T-cell (primary cell): ENCODE measurements at regions of chr9 and their contacts with region 1.

Region 1: DNA sequence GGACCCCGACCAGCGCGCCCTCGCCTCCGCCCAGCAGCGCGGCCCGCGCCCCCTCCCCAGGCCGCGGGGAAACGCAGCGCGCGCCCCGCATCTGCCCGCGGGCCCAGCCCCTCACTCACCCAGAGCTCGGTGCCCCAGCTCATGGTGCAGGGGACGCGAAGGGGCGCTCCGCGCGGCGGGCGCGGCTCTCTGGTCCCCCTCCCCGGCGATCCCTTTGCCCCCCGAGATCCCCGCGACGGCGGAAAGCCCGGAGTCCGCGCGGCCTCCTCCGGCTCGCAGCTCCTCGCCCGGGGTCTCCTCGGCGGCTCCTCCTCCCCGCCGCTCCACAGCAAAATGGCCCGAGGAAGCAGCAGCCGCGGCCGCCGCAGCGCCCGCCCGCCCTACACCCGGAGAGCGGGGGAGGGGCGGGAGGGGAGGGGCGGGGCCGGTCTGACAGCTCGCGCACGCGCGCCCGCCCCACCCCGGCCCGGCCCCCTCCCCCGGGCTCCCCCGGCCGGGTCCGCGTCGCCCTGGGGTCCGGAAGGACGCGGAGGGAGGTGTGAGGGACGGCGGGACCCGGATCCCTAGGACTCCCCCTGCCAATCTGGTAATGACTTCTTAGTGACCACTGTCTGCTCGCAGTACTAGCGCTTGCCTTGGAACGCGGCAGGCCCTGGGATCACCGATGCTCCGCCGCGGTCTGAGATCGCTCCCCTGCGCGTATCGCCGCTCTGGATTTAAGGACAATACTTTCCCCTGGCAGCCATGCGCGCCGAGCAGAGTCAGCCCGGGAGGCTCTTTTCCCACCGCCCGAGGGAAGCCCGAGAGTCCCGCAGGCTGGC is at the start of gene FNBP1:
- DNase-seq: peak; percentile 58 to 88 (median 77)
- ATAC-seq: peak; percentile 75 to 84 (median 78)
- H3K4me3 ChIP-seq: peak within 1 kb of the TSS; percentile 92 to 98
- H3K4me3 Mint-ChIP-seq: peak within 1 kb of the TSS; percentile 98 to 100 (median 99)
- H3K27ac ChIP-seq: peak within 1 kb of the TSS; percentile 82
- H3K27ac Mint-ChIP-seq: peak within 1 kb of the TSS; percentile 97 to 99
- H3K4me1 ChIP-seq: peaks cover 32 to 33% of the 10 kb centered on the region in 2 experiments
- H3K4me1 Mint-ChIP-seq: peaks cover 51 to 66% (median 57%) of the 10 kb centered on the region in 3 donors
- H3K27me3 ChIP-seq: no peaks in the 10 kb centered on the region
- H3K27me3 Mint-ChIP-seq: no peaks in the 10 kb centered on the region
- total RNA-seq, gene FNBP1: 166 to 211 (median 182) TPM

Region 2: GRCh38 chr9:129885670-129886163 is 157.3 kb before region 1 on chr9:
- CTCF ChIA-PET with region 1: interaction called in 1 of 2 experiments, 7 read pairs
- POLR2A ChIA-PET with region 1: interaction called, 7 to 14 read pairs
- DNase-seq: peak; percentile 67 to 92 (median 81)
- ATAC-seq: peak; percentile 14 to 41 (median 38)
- H3K4me3 ChIP-seq: peak overlapping the region; percentile 62 to 90
- H3K4me3 Mint-ChIP-seq: peak overlapping the region; percentile 83 to 95 (median 85)
- H3K27ac ChIP-seq: peak overlapping the region; percentile 99
- H3K27ac Mint-ChIP-seq: peak overlapping the region; percentile 98 to 99
- H3K4me1 ChIP-seq: peaks cover 42 to 75% of the 10 kb centered on the region in 2 experiments
- H3K4me1 Mint-ChIP-seq: peaks cover 64 to 73% (median 68%) of the 10 kb centered on the region in 3 donors
- H3K27me3 ChIP-seq: no peaks in the 10 kb centered on the region
- H3K27me3 Mint-ChIP-seq: no peaks in the 10 kb centered on the region

Region 3: DNA sequence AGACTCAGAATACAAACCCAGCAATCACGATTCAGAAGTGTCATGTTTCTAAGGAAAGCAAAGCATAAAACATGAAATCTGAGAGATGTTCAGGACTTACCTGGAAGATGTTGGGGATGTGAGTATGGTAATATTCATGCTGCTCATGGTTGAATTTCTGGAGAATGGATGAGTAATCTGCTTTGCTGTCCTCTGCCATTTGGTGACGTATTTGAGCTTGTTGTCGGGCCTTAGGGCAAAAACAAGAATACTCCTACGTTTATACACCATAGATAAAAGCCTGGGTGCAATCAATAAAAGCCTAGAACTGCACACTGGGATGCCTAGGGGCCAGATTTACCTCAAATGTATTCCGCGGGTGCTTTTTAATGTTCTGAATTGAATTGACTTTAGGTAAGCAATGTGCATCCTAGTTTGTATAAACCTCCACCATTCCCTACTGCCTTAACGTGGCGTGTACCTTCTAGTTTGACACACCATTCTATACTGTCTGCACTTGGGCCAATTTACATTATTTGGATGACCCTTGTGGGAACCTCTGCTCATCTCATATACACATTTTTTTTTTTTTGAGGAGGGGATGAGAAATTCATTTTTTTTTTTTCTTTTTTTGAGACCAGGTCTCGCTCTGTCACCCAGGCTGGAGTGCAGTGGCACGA is 113.4 kb before region 1 on chr9:
- CTCF ChIA-PET with region 1: interaction called, 3 to 10 read pairs
- POLR2A ChIA-PET with region 1: no interaction called
- DNase-seq: no peak
- ATAC-seq: no peak
- H3K4me3 ChIP-seq: no peak overlapping the region
- H3K4me3 Mint-ChIP-seq: no peak overlapping the region
- H3K27ac ChIP-seq: no peak overlapping the region
- H3K27ac Mint-ChIP-seq: peak overlapping the region; percentile 23 to 52
- H3K4me1 ChIP-seq: peaks cover 20 to 26% of the 10 kb centered on the region in 2 experiments
- H3K4me1 Mint-ChIP-seq: peaks cover 33 to 50% (median 45%) of the 10 kb centered on the region in 3 donors
- H3K27me3 ChIP-seq: no peaks in the 10 kb centered on the region
- H3K27me3 Mint-ChIP-seq: no peaks in the 10 kb centered on the region

Region 4: DNA sequence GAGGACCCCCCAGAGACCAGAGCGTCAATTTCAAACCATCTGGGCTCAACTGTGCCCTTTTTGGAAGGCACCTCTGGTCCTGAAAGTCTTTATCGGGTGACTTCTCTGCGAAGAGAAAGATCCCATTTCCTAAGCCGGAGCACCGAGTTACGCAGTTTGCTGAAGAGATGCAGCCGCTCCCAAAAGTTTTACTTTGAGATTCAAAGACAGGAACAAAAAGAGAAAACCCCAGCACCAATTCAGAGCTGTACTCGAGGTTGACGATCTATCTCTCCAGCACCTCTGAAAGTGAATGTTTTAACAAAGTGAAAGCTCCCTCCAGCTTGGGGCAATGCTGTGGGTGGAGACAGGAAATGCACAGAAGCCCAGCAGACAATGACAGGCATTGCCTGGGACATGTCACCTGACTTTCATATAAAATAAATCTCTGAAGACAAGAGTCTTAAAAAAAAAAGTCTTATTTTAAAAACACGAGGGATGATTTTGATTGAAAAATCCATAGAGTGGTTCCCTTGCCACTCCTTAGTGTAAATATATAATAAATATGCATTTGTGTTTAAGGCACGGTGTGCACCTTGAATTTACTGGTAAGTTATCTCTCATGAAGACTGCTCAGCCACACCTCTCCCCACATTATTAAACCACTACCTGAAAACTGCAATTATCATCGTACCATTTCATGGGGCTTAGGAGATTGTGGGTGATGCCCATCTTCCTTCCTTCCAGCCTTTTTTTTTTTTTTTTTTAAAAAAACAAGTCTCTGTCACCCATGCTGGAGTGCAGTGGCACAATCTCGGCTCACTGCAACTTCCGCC is 79.9 kb before region 1 on chr9:
- CTCF ChIA-PET with region 1: interaction called in 1 of 2 experiments, 4 read pairs
- POLR2A ChIA-PET with region 1: interaction called, 5 to 16 read pairs
- DNase-seq: peak; percentile 30 to 91 (median 76)
- ATAC-seq: peak; percentile 95 to 96 (median 96)
- H3K4me3 ChIP-seq: peak overlapping the region; percentile 56 to 60
- H3K4me3 Mint-ChIP-seq: peak overlapping the region; percentile 82 to 84 (median 84)
- H3K27ac ChIP-seq: peak overlapping the region; percentile 94
- H3K27ac Mint-ChIP-seq: peak overlapping the region; percentile 97 to 99
- H3K4me1 ChIP-seq: peaks cover 42 to 68% of the 10 kb centered on the region in 2 experiments
- H3K4me1 Mint-ChIP-seq: peaks cover 69 to 76% (median 71%) of the 10 kb centered on the region in 3 donors
- H3K27me3 ChIP-seq: no peaks in the 10 kb centered on the region
- H3K27me3 Mint-ChIP-seq: no peaks in the 10 kb centered on the region

Region 5: GRCh38 chr9:129981180-129981907 is 61.7 kb before region 1 on chr9:
- CTCF ChIA-PET with region 1: no interaction called
- POLR2A ChIA-PET with region 1: no interaction called
- DNase-seq: no peak
- ATAC-seq: no peak
- H3K4me3 ChIP-seq: no peak overlapping the region
- H3K4me3 Mint-ChIP-seq: no peak overlapping the region
- H3K27ac ChIP-seq: no peak overlapping the region
- H3K27ac Mint-ChIP-seq: peak overlapping the region; percentile 15 to 58
- H3K4me1 ChIP-seq: peaks cover 3 to 31% of the 10 kb centered on the region in 2 experiments
- H3K4me1 Mint-ChIP-seq: peaks cover 54 to 65% (median 57%) of the 10 kb centered on the region in 3 donors
- H3K27me3 ChIP-seq: no peaks in the 10 kb centered on the region
- H3K27me3 Mint-ChIP-seq: no peaks in the 10 kb centered on the region

Region 6: DNA sequence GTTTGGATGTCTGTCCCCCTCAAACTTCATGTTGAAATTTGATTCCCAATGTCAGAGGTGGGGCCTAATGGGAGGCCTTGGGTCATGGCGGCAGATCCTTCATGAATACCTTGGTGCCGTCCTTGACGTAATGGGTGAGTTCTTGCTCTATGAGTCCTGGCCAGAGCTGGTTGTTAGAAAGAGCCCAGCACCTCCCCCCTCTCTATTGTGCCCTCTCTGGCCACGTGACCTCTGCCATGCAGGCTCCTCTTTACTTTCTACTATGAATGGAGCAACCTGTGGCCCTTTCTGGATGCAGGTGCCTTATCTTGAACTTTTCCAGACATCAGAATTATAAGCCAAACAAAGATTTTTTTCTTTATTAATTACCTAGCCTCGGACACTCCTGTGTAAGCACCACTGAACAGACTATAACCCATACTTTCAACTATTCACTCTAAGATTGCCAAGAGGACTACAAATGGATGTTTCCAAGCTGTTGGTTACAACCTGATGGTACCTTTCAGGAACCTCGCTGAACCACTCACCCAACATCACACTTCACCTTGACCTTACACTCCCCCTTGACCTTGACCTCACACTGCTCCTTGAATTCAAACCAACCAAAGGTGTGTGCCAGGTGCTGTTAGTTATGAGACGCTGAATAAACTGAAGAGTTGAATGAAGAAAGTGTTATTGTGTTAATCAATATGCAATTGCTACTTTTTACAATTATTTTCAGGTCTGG is 40.6 kb before region 1 on chr9:
- CTCF ChIA-PET with region 1: interaction called in 1 of 2 experiments, 8 read pairs
- POLR2A ChIA-PET with region 1: interaction called, 5 to 11 read pairs
- DNase-seq: no peak
- ATAC-seq: no peak
- H3K4me3 ChIP-seq: no peak overlapping the region
- H3K4me3 Mint-ChIP-seq: peak overlapping the region in 1 of 3 donors; percentile 31
- H3K27ac ChIP-seq: peak overlapping the region; percentile 19
- H3K27ac Mint-ChIP-seq: peak overlapping the region; percentile 45 to 70
- H3K4me1 ChIP-seq: peaks cover 6 to 75% of the 10 kb centered on the region in 2 experiments
- H3K4me1 Mint-ChIP-seq: peaks cover 73 to 81% (median 81%) of the 10 kb centered on the region in 3 donors
- H3K27me3 ChIP-seq: no peaks in the 10 kb centered on the region
- H3K27me3 Mint-ChIP-seq: no peaks in the 10 kb centered on the region

Region 7: GRCh38 chr9:130017076-130017475 is 26.0 kb before region 1 on chr9:
- CTCF ChIA-PET with region 1: interaction called in 1 of 2 experiments, 4 read pairs
- POLR2A ChIA-PET with region 1: interaction called in 1 of 2 experiments, 19 read pairs
- DNase-seq: no peak
- ATAC-seq: no peak
- H3K4me3 ChIP-seq: no peak overlapping the region
- H3K4me3 Mint-ChIP-seq: no peak overlapping the region
- H3K27ac ChIP-seq: peak overlapping the region; percentile 24
- H3K27ac Mint-ChIP-seq: peak overlapping the region; percentile 85
- H3K4me1 ChIP-seq: peaks cover 7 to 46% of the 10 kb centered on the region in 2 experiments
- H3K4me1 Mint-ChIP-seq: peaks cover 63 to 72% (median 67%) of the 10 kb centered on the region in 3 donors
- H3K27me3 ChIP-seq: no peaks in the 10 kb centered on the region
- H3K27me3 Mint-ChIP-seq: no peaks in the 10 kb centered on the region

Region 8: DNA sequence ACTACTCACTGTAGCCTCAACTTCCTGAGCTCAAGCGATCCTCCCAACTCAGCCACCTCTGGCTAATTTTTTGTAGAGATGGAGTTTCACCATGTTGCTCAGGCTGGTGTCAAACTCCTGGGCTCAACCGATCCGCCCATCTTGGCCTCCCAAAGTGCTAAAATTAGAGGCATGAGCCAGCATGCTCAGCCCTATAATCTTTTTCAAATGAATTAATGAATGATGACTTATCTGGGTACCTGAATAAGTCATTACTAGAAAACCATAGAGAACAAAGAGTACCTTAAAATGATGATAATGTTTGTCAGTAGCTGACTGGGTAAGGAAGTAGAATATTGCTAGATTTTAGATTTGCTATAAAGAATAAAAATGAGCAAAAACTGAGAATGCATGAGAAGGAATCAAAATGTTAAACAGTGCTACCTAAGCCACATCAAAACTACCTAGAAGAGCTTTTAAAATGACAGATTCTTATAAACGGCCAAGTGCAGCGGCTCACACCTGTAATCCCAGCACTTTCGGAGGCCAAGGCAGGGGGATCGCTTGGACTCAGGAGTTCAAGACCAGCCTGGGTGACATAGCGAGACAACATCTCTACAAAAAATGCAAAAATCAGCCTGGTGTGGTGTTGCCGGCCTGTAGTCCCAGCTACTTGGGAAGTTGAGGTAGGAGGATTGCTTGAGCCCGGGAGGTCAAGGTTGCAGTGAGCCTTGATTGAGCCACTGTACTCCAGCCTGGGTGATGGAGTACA is 13.6 kb before region 1 on chr9:
- CTCF ChIA-PET with region 1: interaction called, 4 to 6 read pairs
- POLR2A ChIA-PET with region 1: interaction called, 6 to 10 read pairs
- DNase-seq: no peak
- ATAC-seq: peak; percentile 25 to 54 (median 32)
- H3K4me3 ChIP-seq: peak overlapping the region in 1 of 2 donors; percentile 15
- H3K4me3 Mint-ChIP-seq: peak overlapping the region; percentile 45 to 74 (median 52)
- H3K27ac ChIP-seq: peak overlapping the region; percentile 47
- H3K27ac Mint-ChIP-seq: peak overlapping the region; percentile 53 to 88
- H3K4me1 ChIP-seq: peaks cover 28 to 77% of the 10 kb centered on the region in 2 experiments
- H3K4me1 Mint-ChIP-seq: peaks cover 95 to 98% (median 96%) of the 10 kb centered on the region in 3 donors
- H3K27me3 ChIP-seq: no peaks in the 10 kb centered on the region
- H3K27me3 Mint-ChIP-seq: no peaks in the 10 kb centered on the region

Region 9: GRCh38 chr9:131402738-131403492 is 1359.9 kb after region 1 on chr9:
- CTCF ChIA-PET with region 1: no interaction called
- POLR2A ChIA-PET with region 1: no interaction called
- DNase-seq: no peak
- ATAC-seq: no peak
- H3K4me3 ChIP-seq: no peak overlapping the region
- H3K4me3 Mint-ChIP-seq: peak overlapping the region in 2 of 3 donors; percentile 26 to 93
- H3K27ac ChIP-seq: no peak overlapping the region
- H3K27ac Mint-ChIP-seq: peak overlapping the region; percentile 26 to 57
- H3K4me1 ChIP-seq: peaks cover 67 to 94% of the 10 kb centered on the region in 2 experiments
- H3K4me1 Mint-ChIP-seq: peaks cover 91 to 92% (median 91%) of the 10 kb centered on the region in 3 donors
- H3K27me3 ChIP-seq: no peaks in the 10 kb centered on the region
- H3K27me3 Mint-ChIP-seq: no peaks in the 10 kb centered on the region